ENCODE measurements at regions of chrX and their contacts with region 1.

Region 1: DNA sequence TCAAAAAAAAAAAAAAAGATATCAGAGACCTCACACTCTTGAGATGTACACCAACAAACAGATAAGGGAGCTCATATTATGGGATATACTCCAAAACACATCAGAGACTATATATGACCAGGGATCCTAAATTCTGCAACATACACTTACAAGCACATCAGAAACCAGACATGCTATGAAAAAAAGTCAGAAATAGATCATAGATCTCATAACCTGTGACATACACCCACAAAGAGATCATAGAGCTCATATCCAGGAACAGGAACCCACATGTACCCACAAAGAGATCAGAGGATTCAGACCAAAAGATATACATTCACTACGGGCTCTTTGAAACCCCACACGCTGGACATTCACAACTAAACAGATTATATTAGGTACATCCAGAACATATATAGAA is 30.1 kb downstream of the SUV39H1 start:
- DNase-seq: peak in 3 of 10 donors; percentile 14 to 54 (median 39)
- ATAC-seq: peak; percentile 56 to 91
- H3K4me3 Mint-ChIP-seq: peak overlapping the region in 6 of 10 donors; percentile 6 to 71 (median 48)
- H3K27ac Mint-ChIP-seq: peak overlapping the region in 9 of 10 donors; percentile 3 to 86 (median 68)
- H3K4me1 Mint-ChIP-seq: peaks cover 25 to 49% (median 41%) of the 10 kb centered on the region in 4 donors
- H3K27me3 Mint-ChIP-seq: no peaks in the 10 kb centered on the region

Region 2: GRCh38 chrX:48715072-48715471 is 11.5 kb before region 1 on chrX:
- POLR2A ChIA-PET with region 1: interaction called, 11 read pairs
- DNase-seq: no peak
- ATAC-seq: peak in 1 of 2 donors; percentile 6
- H3K4me3 Mint-ChIP-seq: peak overlapping the region in 8 of 10 donors; percentile 11 to 75 (median 64)
- H3K27ac Mint-ChIP-seq: peak overlapping the region; percentile 78 to 97 (median 90)
- H3K4me1 Mint-ChIP-seq: peaks cover 66 to 86% (median 85%) of the 10 kb centered on the region in 4 donors
- H3K27me3 Mint-ChIP-seq: no peaks in the 10 kb centered on the region

Measured in naive thymus-derived CD8-positive, alpha-beta T cell (primary cell).